ENCODE measurements at regions of chr5 and their contacts with region 1.

Region 1: GRCh38 chr5:37722236-37723146 is 117.3 kb downstream of the GDNF start:
- DNase-seq: no peak
- ATAC-seq: no peak
- H3K4me3 ChIP-seq: no peak overlapping the region
- H3K27ac ChIP-seq: peak overlapping the region in 3 of 4 donors; percentile 63 to 79 (median 73)
- H3K4me1 ChIP-seq: peaks cover 10 to 24% of the 10 kb centered on the region in 2 donors
- H3K27me3 ChIP-seq: no peaks in the 10 kb centered on the region
- CTCF ChIP-seq: no peak
- POLR2A ChIP-seq: no peak

Region 2: DNA sequence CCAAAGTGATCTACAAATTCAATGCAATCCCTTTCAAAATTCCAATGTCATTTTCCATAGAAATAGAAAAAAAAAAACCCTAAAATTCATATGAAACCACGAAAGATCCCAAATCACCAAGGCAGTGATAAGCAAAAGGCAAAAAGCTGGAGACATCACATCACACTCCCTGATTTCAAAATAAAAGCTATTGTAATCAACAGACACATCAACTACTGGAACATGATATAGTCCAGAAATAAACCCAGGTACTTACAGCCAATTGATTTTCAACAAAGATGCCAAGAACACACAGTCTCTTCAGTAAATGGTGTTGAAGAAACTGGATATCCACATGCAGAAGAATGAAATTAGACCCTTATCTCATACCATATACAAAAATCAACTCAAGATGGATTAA is 119.4 kb before region 1 on chr5:
- in situ Hi-C with region 1: no loop called
- intact Hi-C with region 1: loop called (anchors 5 kb)
- DNase-seq: no peak
- ATAC-seq: peak; percentile 95 to 97
- H3K4me3 ChIP-seq: peak overlapping the region in 3 of 4 donors; percentile 8 to 25 (median 14)
- H3K27ac ChIP-seq: peak overlapping the region; percentile 76 to 89 (median 78)
- H3K4me1 ChIP-seq: peaks cover 22 to 23% of the 10 kb centered on the region in 2 donors
- H3K27me3 ChIP-seq: no peaks in the 10 kb centered on the region
- CTCF ChIP-seq: no peak
- POLR2A ChIP-seq: no peak

Region 3: GRCh38 chr5:37668524-37669047 is 53.9 kb before region 1 on chr5:
- in situ Hi-C with region 1: no loop called
- intact Hi-C with region 1: loop called (anchors 2 kb)
- DNase-seq: peak; percentile 93 to 94
- ATAC-seq: peak; percentile 95
- H3K4me3 ChIP-seq: no peak overlapping the region
- H3K27ac ChIP-seq: peak overlapping the region; percentile 78 to 89 (median 84)
- H3K4me1 ChIP-seq: peaks cover 52 to 60% of the 10 kb centered on the region in 2 donors
- H3K27me3 ChIP-seq: no peaks in the 10 kb centered on the region
- CTCF ChIP-seq: no peak
- POLR2A ChIP-seq: no peak

Region 4: GRCh38 chr5:37812365-37812764 is 89.9 kb after region 1 on chr5:
- in situ Hi-C with region 1: no loop called
- intact Hi-C with region 1: loop called (anchors 1 kb)
- DNase-seq: peak in 1 of 2 donors; percentile 44
- ATAC-seq: peak; percentile 25 to 37
- H3K4me3 ChIP-seq: no peak overlapping the region
- H3K27ac ChIP-seq: peak overlapping the region; percentile 54 to 87 (median 70)
- H3K4me1 ChIP-seq: peaks cover 0 to 18% of the 10 kb centered on the region in 2 donors
- H3K27me3 ChIP-seq: no peaks in the 10 kb centered on the region
- CTCF ChIP-seq: no peak
- POLR2A ChIP-seq: no peak

Region 5: GRCh38 chr5:38202741-38203140 is 480.2 kb after region 1 on chr5:
- in situ Hi-C with region 1: no loop called
- intact Hi-C with region 1: no loop called
- DNase-seq: no peak
- ATAC-seq: no peak
- H3K4me3 ChIP-seq: no peak overlapping the region
- H3K27ac ChIP-seq: no peak overlapping the region
- H3K4me1 ChIP-seq: no peaks in the 10 kb centered on the region
- H3K27me3 ChIP-seq: peaks cover 0 to 12% (median 4%) of the 10 kb centered on the region in 3 donors
- CTCF ChIP-seq: no peak
- POLR2A ChIP-seq: no peak

Measured in gastrocnemius medialis (tissue), 4 donors.